Panc1 (cell line): ENCODE measurements at regions of chr20 and their contacts with region 1.

Region 1: GRCh38 chr20:48875911-48876640 is 45.4 kb upstream of the ARFGEF2 start:
- DNase-seq: no peak
- ATAC-seq: no peak
- H3K4me3 ChIP-seq: no peak overlapping the region
- H3K27ac ChIP-seq: no peak overlapping the region
- H3K4me1 ChIP-seq: no peaks in the 10 kb centered on the region
- H3K27me3 ChIP-seq: no peaks in the 10 kb centered on the region
- CTCF ChIP-seq: no peak

Region 2: DNA sequence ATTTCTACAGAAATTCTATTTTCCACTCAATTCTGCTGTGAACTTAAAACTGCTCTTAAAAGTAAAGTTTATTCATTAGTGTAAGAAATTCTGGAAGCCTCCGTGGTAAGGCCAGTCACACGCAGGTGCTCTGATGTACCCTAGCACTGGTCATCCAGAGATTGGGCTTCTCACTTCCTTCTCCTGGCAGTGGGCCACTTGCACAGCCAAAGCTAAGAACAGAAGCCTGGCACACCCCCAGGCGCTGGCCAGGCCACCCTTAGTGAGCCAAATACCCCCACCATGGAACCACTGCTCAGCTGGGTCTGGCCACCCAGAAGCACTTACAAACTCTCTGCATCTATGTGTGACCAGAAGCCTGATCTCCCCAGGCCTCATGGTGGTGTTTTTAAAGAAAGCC is 10.1 kb after region 1 on chr20:
- CTCF ChIA-PET with region 1: no interaction called
- POLR2A ChIA-PET with region 1: interaction called, 15 read pairs
- in situ Hi-C with region 1: no loop called
- intact Hi-C with region 1: no loop called
- DNase-seq: no peak
- ATAC-seq: no peak
- H3K4me3 ChIP-seq: no peak overlapping the region
- H3K27ac ChIP-seq: no peak overlapping the region
- H3K4me1 ChIP-seq: no peaks in the 10 kb centered on the region
- H3K27me3 ChIP-seq: no peaks in the 10 kb centered on the region
- CTCF ChIP-seq: no peak

Region 3: DNA sequence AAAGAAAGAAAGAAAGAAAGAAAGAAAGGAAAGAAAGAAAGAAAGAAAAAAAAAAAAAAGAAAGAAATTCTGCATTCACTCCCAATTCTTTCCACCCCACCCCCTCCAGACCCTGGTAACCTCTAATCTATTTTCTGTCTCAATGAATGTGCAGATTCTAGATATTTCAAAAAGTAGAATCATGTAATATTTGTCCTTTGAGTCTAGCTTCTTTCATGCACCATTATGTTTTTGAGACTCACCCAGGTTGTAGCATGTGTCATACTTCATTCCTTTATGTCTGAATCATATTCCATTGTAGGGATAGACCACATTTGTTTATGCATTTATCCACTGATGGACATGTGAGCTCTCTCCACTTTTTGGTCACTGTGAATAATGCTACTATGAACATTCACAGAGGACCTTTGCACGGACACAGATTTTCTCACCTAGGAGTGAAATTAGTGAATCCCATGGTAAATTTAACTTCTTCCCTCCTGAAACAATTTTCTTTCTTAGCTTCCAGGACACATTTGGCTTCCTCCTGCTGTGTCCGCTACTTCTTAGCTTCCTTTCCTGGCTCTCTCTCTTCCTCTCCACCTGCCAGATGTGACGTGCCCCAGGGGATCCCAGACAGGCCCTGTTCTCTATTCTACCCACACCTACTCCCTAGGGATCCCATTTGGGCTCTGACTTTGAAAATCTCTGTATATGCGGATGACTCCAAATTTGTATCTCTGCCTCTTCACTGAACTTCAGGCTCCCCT is 21.3 kb after region 1 on chr20:
- CTCF ChIA-PET with region 1: no interaction called
- POLR2A ChIA-PET with region 1: interaction called, 10 read pairs
- in situ Hi-C with region 1: no loop called
- intact Hi-C with region 1: no loop called
- DNase-seq: peak; percentile 91
- ATAC-seq: peak; percentile 93
- H3K4me3 ChIP-seq: no peak overlapping the region
- H3K27ac ChIP-seq: peak overlapping the region; percentile 4; the same call in 1 of the 2 replicates
- H3K4me1 ChIP-seq: peaks cover 4% of the 10 kb centered on the region; the same call in 1 of the 2 replicates
- H3K27me3 ChIP-seq: no peaks in the 10 kb centered on the region
- CTCF ChIP-seq: no peak